Activated T-helper 1 cell treated with anti-CD3 and anti-CD28 coated beads, Interleukin-12 subunit alpha, Interleukin-12 subunit beta, Interleukin-2, Interleukin-4 antibody, amounts not matched to agents 30 ng/mL and 10 ng/mL and 1 ng/mL, durations not matched to agents 14 hours and 24 hours and 36 hours (primary cell): ENCODE measurements at regions of chr10 and their contacts with region 1.

Region 1: GRCh38 chr10:5915451-5915850 is 25.4 kb downstream of the FBH1 start:
- DNase-seq: no peak
- H3K4me3 Mint-ChIP-seq: no peak overlapping the region
- H3K27ac Mint-ChIP-seq: no peak overlapping the region
- H3K4me1 Mint-ChIP-seq: no peaks in the 10 kb centered on the region
- H3K27me3 Mint-ChIP-seq: no peaks in the 10 kb centered on the region

Region 2: DNA sequence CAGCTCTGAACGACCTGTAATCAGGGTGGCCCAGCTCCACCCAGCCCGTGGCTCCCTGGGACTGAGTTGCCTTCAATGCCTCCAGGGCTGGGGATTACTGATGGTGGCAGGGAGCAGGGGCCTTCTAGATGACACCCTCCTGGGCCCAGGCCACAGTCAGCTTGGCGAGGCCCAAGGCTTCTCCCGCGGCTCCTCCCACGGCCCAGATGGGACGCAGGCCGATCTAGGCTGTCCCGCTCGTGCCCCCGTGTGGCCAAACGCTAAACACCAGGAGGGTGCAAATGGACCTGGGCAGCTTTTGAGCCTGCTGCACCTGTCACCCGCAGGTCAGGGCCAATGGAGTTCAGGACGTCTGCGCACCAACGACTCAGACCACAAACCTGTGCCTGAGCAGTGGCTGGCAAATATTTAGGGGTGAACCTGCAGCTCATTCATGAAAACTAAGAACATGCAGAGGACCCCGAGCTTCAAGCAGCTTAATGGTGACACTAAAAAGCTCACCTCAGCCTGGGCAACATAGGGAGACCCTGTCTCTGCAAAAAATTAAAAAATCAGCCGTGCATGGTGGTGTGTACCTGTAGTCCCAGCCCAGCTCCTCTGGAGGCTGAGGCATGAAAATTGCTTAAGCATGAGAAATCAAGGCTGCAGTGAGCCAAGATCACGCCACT is 292.2 kb before region 1 on chr10:
- intact Hi-C with region 1: no loop called
- DNase-seq: peak; percentile 72
- H3K4me3 Mint-ChIP-seq: no peak overlapping the region
- H3K27ac Mint-ChIP-seq: no peak overlapping the region
- H3K4me1 Mint-ChIP-seq: no peaks in the 10 kb centered on the region
- H3K27me3 Mint-ChIP-seq: peaks cover 6% of the 10 kb centered on the region

Region 3: GRCh38 chr10:5805711-5806110 is 109.7 kb before region 1 on chr10:
- intact Hi-C with region 1: no loop called
- DNase-seq: no peak
- H3K4me3 Mint-ChIP-seq: no peak overlapping the region
- H3K27ac Mint-ChIP-seq: no peak overlapping the region
- H3K4me1 Mint-ChIP-seq: peaks cover 51% of the 10 kb centered on the region
- H3K27me3 Mint-ChIP-seq: no peaks in the 10 kb centered on the region

Region 4: GRCh38 chr10:5933909-5934546 is 18.6 kb after region 1 on chr10:
- intact Hi-C with region 1: loop called (anchors 1 kb)
- DNase-seq: no peak
- H3K4me3 Mint-ChIP-seq: no peak overlapping the region
- H3K27ac Mint-ChIP-seq: no peak overlapping the region
- H3K4me1 Mint-ChIP-seq: no peaks in the 10 kb centered on the region
- H3K27me3 Mint-ChIP-seq: no peaks in the 10 kb centered on the region